ENCODE measurements at regions of chr9 and their contacts with region 1.

Region 1: DNA sequence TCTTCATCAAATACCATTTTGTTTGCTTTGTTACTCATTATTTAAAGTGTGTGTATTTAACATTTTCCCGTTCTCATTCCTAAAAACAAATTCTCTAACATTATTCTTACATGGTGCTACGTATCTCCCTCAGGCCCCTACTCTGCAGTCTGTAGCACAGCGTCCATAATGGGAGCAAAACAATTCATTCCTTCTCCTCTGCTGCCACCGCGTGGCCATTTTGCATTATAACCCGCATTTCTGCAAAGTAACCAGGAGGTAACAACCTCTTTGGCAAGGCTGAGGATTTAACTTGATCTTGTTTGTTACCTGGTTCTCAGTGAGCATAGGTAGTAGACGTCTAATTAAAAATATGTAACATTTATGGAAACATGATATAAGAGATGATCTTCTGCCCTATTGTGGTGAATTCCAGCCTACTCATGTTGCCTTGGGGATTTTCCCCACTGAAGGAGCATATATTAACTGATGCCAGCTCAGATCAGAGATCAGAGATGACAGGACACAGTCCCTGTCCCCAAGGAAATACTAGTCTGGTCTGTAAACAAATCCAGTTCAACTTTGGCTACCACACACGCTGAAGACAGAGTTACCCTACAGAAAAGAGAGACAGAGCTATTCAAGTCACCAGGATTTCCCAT is 10.5 kb downstream of the OR1K1 start:
- DNase-seq: no peak
- H3K4me3 ChIP-seq: no peak overlapping the region
- H3K27me3 ChIP-seq: no peaks in the 10 kb centered on the region
- CTCF ChIP-seq: peak; percentile 59

Region 2: GRCh38 chr9:122464633-122465567 is 345.5 kb before region 1 on chr9:
- CTCF ChIA-PET with region 1: interaction called, 110 read pairs
- POLR2A ChIA-PET with region 1: no interaction called
- DNase-seq: peak; percentile 69
- H3K4me3 ChIP-seq: peak overlapping the region; percentile 33
- H3K27me3 ChIP-seq: no peaks in the 10 kb centered on the region
- CTCF ChIP-seq: peak; percentile 82

Region 3: DNA sequence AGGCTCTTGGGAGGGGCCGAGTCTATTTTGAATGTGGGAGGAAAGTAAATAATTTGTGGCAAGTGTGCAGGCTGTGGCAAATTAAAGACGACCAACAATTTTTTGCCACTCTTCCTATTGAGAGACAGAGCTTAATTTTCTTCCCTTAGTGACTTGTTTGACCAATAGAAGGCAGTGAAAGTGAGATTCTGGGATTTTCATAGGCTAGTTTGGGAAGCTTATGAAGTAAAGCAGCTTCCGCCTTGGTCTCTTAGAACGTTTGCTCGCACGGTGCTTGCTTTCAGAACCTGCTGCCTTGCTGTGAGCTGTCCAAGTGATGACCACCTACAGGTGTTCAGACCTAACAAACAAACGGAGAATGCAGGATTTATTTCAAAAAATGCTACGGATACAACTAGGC is 264.2 kb before region 1 on chr9:
- CTCF ChIA-PET with region 1: no interaction called
- POLR2A ChIA-PET with region 1: no interaction called
- DNase-seq: no peak
- H3K4me3 ChIP-seq: no peak overlapping the region
- H3K27me3 ChIP-seq: no peaks in the 10 kb centered on the region
- CTCF ChIP-seq: no peak

Region 4: GRCh38 chr9:122767817-122768216 is 42.6 kb before region 1 on chr9:
- CTCF ChIA-PET with region 1: no interaction called
- POLR2A ChIA-PET with region 1: no interaction called
- DNase-seq: no peak
- H3K4me3 ChIP-seq: no peak overlapping the region
- H3K27me3 ChIP-seq: no peaks in the 10 kb centered on the region
- CTCF ChIP-seq: no peak

Region 5: GRCh38 chr9:122827761-122828093 is 17.3 kb after region 1 on chr9:
- CTCF ChIA-PET with region 1: interaction called, 4 read pairs
- POLR2A ChIA-PET with region 1: interaction called, 14 read pairs
- DNase-seq: no peak
- H3K4me3 ChIP-seq: peak overlapping the region; percentile 87
- H3K27me3 ChIP-seq: no peaks in the 10 kb centered on the region
- CTCF ChIP-seq: no peak

Measured in BJ (cell line).